IMR-90 (cell line): ENCODE measurements at regions of chr5 and their contacts with region 1.

Region 1: GRCh38 chr5:142713121-142713706 is 27.3 kb upstream of the FGF1 start:
- DNase-seq: peak; percentile 80
- ATAC-seq: peak; percentile 92
- H3K4me3 ChIP-seq: peak overlapping the region; percentile 79
- H3K27ac ChIP-seq: peak overlapping the region; percentile 43
- H3K4me1 ChIP-seq: 0 out of 2 replicates have a peak, but pooled peaks cover 2% of the 10 kb centered on the region
- H3K27me3 ChIP-seq: peaks cover 1% of the 10 kb centered on the region; the same call in 1 of the 2 replicates
- CTCF ChIP-seq: peak; percentile 76
- POLR2A ChIP-seq: no peak
- RAD21 ChIP-seq: peak; percentile 55

Region 2: GRCh38 chr5:142699184-142699720 is 14.0 kb before region 1 on chr5:
- CTCF ChIA-PET with region 1: interaction called, 27 read pairs
- POLR2A ChIA-PET with region 1: no interaction called
- dilution Hi-C with region 1: no loop called
- in situ Hi-C with region 1: no loop called
- intact Hi-C with region 1: no loop called
- DNase-seq: peak; percentile 84
- ATAC-seq: peak; percentile 98
- H3K4me3 ChIP-seq: no peak overlapping the region
- H3K27ac ChIP-seq: no peak overlapping the region
- H3K4me1 ChIP-seq: peaks cover 10% of the 10 kb centered on the region
- H3K27me3 ChIP-seq: no peaks in the 10 kb centered on the region
- CTCF ChIP-seq: peak; percentile 99
- POLR2A ChIP-seq: peak; percentile 69
- RAD21 ChIP-seq: peak; percentile 100

Region 3: GRCh38 chr5:142874537-142874936 is 161.3 kb after region 1 on chr5:
- CTCF ChIA-PET with region 1: interaction called, 38 read pairs
- POLR2A ChIA-PET with region 1: no interaction called
- dilution Hi-C with region 1: loop called (anchors 25 kb)
- in situ Hi-C with region 1: no loop called
- intact Hi-C with region 1: no loop called
- DNase-seq: no peak
- ATAC-seq: no peak
- H3K4me3 ChIP-seq: no peak overlapping the region
- H3K27ac ChIP-seq: no peak overlapping the region
- H3K4me1 ChIP-seq: 0 out of 2 replicates have a peak, but pooled peaks cover 2% of the 10 kb centered on the region
- H3K27me3 ChIP-seq: peaks cover 23% of the 10 kb centered on the region
- CTCF ChIP-seq: no peak
- POLR2A ChIP-seq: no peak
- RAD21 ChIP-seq: no peak

Region 4: DNA sequence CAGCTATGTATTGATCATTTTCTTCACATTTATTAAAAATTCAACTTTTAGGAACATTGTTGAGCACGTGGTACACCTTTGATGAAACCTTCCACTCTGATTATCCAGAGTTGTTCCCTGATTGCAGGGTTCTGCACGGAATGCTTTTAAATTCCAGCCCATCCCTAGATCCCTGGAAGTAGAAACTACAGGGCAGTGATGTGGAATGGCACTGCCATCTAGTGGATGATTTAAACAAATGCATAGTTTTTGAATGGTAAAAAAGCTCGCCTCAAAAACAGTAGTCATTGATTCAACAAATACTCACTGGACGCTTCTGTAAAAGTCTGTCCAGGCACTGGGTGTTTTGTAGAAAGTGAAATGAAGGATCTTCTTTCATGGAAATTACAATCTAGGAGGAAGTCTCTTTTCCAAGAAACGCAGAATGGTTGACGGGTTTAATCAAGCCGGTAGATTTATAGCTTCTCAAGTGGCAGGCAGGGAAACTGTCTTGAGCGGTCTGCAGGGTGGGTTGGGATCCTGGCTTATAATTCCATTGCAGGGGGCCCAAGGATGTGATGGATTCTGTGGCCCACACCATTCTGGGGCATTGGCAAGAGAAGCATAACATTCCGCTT is 175.4 kb after region 1 on chr5:
- CTCF ChIA-PET with region 1: interaction called, 33 read pairs
- POLR2A ChIA-PET with region 1: no interaction called
- dilution Hi-C with region 1: loop called (anchors 25 kb)
- in situ Hi-C with region 1: no loop called
- intact Hi-C with region 1: loop called (anchors 1 kb)
- DNase-seq: peak; percentile 73
- ATAC-seq: peak; percentile 92
- H3K4me3 ChIP-seq: no peak overlapping the region
- H3K27ac ChIP-seq: no peak overlapping the region
- H3K4me1 ChIP-seq: no peaks in the 10 kb centered on the region
- H3K27me3 ChIP-seq: no peaks in the 10 kb centered on the region
- CTCF ChIP-seq: peak; percentile 79
- POLR2A ChIP-seq: no peak
- RAD21 ChIP-seq: peak; percentile 88

Region 5: GRCh38 chr5:142906863-142907671 is 193.9 kb after region 1 on chr5:
- CTCF ChIA-PET with region 1: no interaction called
- POLR2A ChIA-PET with region 1: no interaction called
- dilution Hi-C with region 1: no loop called
- in situ Hi-C with region 1: no loop called
- intact Hi-C with region 1: no loop called
- DNase-seq: peak; percentile 96
- ATAC-seq: peak; percentile 72
- H3K4me3 ChIP-seq: no peak overlapping the region
- H3K27ac ChIP-seq: no peak overlapping the region
- H3K4me1 ChIP-seq: peaks cover 3% of the 10 kb centered on the region
- H3K27me3 ChIP-seq: no peaks in the 10 kb centered on the region; the same call in 1 of the 2 replicates
- CTCF ChIP-seq: no peak
- POLR2A ChIP-seq: no peak
- RAD21 ChIP-seq: no peak

Region 6: GRCh38 chr5:143054480-143054941 is 341.3 kb after region 1 on chr5:
- CTCF ChIA-PET with region 1: no interaction called
- POLR2A ChIA-PET with region 1: no interaction called
- dilution Hi-C with region 1: no loop called
- in situ Hi-C with region 1: no loop called
- intact Hi-C with region 1: no loop called
- DNase-seq: peak; percentile 60
- ATAC-seq: no peak; the same call in 1 of the 2 replicates
- H3K4me3 ChIP-seq: no peak overlapping the region
- H3K27ac ChIP-seq: no peak overlapping the region; the same call in 1 of the 2 replicates
- H3K4me1 ChIP-seq: peaks cover 20% of the 10 kb centered on the region
- H3K27me3 ChIP-seq: no peaks in the 10 kb centered on the region
- CTCF ChIP-seq: no peak
- POLR2A ChIP-seq: no peak
- RAD21 ChIP-seq: no peak

Region 7: GRCh38 chr5:144191998-144192397 is 1478.8 kb after region 1 on chr5:
- CTCF ChIA-PET with region 1: no interaction called
- POLR2A ChIA-PET with region 1: no interaction called
- dilution Hi-C with region 1: no loop called
- in situ Hi-C with region 1: no loop called
- intact Hi-C with region 1: loop called (anchors 10 kb)
- DNase-seq: peak; percentile 87
- ATAC-seq: peak; percentile 46
- H3K4me3 ChIP-seq: peak overlapping the region; percentile 41; the same call in 1 of the 2 replicates
- H3K27ac ChIP-seq: peak overlapping the region; percentile 37; the same call in 1 of the 2 replicates
- H3K4me1 ChIP-seq: peaks cover 12% of the 10 kb centered on the region
- H3K27me3 ChIP-seq: no peaks in the 10 kb centered on the region
- CTCF ChIP-seq: peak; percentile 64
- POLR2A ChIP-seq: no peak
- RAD21 ChIP-seq: peak; percentile 64